Tibial artery (tissue), 4 donors: ENCODE measurements at regions of chr1 and their contacts with region 1.

Region 1: DNA sequence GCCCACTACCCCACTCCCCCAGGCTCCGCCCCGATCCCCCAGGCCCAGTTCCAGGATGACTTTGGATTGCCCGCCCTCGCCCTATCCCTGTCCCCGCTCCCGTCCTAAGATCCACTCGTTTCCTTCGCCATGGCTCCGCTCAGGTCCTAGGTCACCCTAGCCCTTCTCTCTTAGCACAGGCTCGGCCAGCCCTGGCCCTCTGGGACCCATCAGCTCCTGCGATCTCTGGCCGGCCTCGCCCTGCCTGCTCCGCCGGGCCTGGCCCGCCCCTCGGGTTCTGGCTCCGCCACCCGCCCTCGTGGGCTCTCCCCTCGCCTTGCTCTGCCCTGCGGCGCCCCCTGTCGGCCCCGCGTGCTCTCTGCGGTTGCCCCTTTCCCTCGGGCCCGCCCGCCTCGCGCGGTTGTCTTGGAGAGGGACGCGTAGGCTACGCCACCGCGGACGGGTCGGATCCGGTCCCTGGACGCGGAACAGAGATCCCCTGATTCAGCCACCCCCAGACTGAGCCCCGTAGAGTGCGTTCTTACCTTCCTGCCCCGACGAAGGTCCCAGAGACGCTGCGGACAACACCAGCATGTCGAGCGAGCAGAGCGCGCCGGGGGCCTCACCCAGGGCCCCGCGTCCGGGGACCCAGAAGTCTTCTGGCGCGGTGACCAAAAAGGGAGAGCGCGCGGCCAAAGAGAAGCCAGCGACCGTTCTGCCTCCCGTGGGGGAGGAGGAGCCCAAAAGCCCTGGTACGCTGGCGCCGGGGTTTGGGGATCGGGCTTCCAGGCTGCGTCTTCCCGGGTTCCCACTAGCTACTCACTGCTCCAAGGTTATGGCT is at the start of gene LRRC71:
- DNase-seq: peak; percentile 55 to 87
- H3K4me3 ChIP-seq: peak within 1 kb of the TSS in 1 of 2 donors; percentile 17
- H3K27ac ChIP-seq: peak within 1 kb of the TSS in 1 of 2 donors; percentile 24
- H3K4me1 ChIP-seq: peaks cover 0 to 27% (median 22%) of the 10 kb centered on the region in 4 donors
- H3K27me3 ChIP-seq: peaks cover 7 to 54% of the 10 kb centered on the region in 2 donors
- CTCF ChIP-seq: peak; percentile 84 to 91

Region 2: GRCh38 chr1:156839426-156840109 is 80.9 kb before region 1 on chr1:
- intact Hi-C with region 1: loop called (anchors 5 kb)
- DNase-seq: no peak
- H3K4me3 ChIP-seq: no peak overlapping the region
- H3K27ac ChIP-seq: no peak overlapping the region
- H3K4me1 ChIP-seq: peaks cover 0 to under 1% (median 0%) of the 10 kb centered on the region in 4 donors
- H3K27me3 ChIP-seq: peaks cover 0 to 92% of the 10 kb centered on the region in 2 donors
- CTCF ChIP-seq: no peak

Region 3: DNA sequence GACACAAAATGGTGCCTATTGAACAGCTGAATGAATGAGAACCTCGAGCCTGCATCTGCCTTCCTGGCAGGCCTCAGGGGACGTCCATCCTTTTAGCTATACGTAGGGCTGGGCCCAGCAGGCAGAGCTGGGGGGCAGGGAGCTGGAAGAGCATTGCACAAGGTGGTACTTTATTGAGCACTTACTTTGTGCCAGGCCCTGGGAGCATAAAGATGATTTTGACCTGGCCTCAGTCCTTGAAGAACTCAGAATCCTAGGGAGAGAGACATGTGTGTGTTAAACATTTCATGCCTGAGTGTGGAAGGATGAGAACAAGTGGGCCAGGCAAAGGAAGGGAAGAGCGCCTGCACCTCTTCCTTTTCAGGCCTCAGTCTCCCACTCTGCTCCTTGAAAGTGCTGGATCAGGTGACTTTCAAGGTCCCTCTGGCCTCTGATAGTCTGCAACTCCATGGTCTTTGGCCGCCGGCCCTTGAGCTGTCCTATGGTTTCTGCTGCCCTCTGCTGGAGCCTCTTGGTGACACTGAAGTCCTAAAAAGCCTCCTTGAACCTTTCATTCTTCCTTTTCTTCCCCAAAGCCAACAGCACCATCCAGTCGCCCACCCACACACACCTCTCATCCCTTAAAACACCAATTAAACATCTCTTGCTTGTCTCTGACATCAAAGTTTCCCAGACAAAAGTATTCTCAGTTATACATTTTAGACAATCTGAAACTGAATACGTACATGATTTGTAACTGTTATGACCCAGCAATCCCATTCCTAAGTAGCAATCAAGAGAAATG is 30.4 kb before region 1 on chr1:
- intact Hi-C with region 1: loop called (anchors 2 kb)
- DNase-seq: peak; percentile 87
- H3K4me3 ChIP-seq: no peak overlapping the region
- H3K27ac ChIP-seq: no peak overlapping the region
- H3K4me1 ChIP-seq: peaks cover 0 to 29% (median 20%) of the 10 kb centered on the region in 4 donors
- H3K27me3 ChIP-seq: peaks cover 0 to 12% of the 10 kb centered on the region in 2 donors
- CTCF ChIP-seq: peak; percentile 73 to 79

Region 4: DNA sequence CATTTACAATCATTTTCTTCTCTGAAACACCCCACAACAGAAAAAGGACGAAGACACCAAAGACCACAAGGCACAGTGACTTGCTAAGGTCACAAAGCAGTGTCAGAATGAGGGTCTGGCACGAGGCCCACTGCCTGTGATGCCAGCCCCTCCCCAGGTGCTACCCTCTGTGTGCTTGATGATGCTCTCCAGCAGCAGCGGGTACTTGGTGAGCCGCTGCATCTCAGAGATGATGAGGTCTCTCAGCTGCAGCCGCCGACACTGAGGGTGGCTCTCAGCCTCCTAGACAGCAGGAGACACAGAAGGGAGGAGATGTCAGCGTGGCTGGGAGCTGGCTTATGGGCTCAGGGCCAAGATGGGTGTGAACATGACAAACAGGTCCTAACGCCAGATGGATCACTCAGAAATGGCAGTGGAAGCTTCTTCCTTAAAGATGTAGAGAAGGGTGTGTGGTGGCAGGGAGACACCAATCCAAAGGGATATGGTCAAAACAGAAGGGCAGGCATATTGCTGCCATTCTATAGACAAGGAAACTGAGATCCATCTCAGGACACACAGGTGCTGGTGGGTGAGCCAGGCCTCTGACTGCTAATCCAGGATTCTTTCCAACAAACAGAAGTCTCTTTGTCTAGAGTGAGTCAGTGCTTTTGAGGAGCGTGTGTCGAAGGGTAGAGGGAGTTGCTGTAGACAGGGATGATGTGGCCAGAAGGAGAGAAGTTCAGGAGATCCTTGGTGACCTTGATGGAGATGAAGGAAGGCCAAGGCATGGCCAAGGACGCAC is 25.6 kb after region 1 on chr1:
- intact Hi-C with region 1: no loop called
- DNase-seq: peak in 1 of 2 donors; percentile 57
- H3K4me3 ChIP-seq: no peak overlapping the region
- H3K27ac ChIP-seq: no peak overlapping the region
- H3K4me1 ChIP-seq: no peaks in the 10 kb centered on the region
- H3K27me3 ChIP-seq: no peaks in the 10 kb centered on the region
- CTCF ChIP-seq: no peak

Region 5: DNA sequence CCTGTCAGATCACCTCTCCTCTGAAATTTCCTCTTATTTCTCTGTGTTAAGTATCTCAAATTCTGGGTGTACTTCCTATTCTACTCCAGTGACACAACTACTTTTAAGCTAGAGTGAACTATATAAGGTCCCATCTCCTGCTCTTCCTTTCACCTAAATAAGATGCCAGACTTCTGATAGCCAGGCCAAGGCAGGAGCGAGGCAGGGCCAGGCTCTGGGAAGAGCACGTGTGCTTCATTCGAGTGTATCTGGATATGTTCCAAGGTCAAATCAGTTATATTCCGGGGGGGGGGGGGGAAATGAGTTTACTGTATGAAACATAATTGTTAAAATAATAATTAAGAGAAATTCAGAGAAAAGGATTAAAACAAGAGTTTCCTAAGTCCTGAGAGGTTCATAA is 60.1 kb after region 1 on chr1:
- intact Hi-C with region 1: no loop called
- DNase-seq: no peak
- H3K4me3 ChIP-seq: no peak overlapping the region
- H3K27ac ChIP-seq: no peak overlapping the region
- H3K4me1 ChIP-seq: no peaks in the 10 kb centered on the region
- H3K27me3 ChIP-seq: no peaks in the 10 kb centered on the region
- CTCF ChIP-seq: no peak